IMR-90 (cell line): ENCODE measurements at regions of chr1 and their contacts with region 1.

Region 1: DNA sequence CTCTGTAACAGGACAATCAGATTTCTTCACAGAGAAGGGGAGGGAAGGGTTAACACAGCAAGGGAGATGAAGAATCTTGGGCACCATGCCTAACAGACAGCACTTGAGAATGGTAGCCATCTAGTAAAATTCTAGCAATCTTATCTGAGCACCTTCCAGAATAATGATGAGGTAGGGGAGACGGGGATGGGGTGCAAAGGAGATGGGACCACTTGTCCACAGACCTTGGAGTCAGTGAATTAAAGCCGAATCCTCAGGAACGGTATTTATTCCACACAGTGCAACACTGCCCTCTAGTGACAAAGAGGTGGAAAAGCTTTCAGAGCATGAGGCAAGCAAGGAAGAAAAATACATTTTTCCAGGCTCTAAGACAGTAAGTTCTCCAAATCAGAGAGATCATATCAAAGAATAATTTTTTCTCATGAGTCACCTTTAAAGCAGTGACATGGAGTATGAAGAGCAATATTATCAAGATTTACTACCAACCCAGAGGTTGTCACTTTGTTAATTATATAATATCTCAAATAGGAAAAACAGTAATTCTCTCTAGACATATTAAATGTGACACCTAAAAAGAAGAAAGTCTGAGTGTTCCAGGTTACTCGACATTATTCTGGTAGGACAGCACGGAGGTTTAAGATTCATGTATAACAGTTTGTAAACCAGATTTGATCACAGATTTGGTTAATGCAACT is 43.3 kb upstream of the LPAR3 start:
- DNase-seq: peak; percentile 72
- ATAC-seq: peak; percentile 92
- H3K4me3 ChIP-seq: no peak overlapping the region
- H3K27ac ChIP-seq: no peak overlapping the region
- H3K4me1 ChIP-seq: peaks cover 2% of the 10 kb centered on the region; the same call in 1 of the 2 replicates
- H3K27me3 ChIP-seq: peaks cover 12% of the 10 kb centered on the region
- CTCF ChIP-seq: peak; percentile 95
- POLR2A ChIP-seq: no peak
- RAD21 ChIP-seq: peak; percentile 96

Region 2: DNA sequence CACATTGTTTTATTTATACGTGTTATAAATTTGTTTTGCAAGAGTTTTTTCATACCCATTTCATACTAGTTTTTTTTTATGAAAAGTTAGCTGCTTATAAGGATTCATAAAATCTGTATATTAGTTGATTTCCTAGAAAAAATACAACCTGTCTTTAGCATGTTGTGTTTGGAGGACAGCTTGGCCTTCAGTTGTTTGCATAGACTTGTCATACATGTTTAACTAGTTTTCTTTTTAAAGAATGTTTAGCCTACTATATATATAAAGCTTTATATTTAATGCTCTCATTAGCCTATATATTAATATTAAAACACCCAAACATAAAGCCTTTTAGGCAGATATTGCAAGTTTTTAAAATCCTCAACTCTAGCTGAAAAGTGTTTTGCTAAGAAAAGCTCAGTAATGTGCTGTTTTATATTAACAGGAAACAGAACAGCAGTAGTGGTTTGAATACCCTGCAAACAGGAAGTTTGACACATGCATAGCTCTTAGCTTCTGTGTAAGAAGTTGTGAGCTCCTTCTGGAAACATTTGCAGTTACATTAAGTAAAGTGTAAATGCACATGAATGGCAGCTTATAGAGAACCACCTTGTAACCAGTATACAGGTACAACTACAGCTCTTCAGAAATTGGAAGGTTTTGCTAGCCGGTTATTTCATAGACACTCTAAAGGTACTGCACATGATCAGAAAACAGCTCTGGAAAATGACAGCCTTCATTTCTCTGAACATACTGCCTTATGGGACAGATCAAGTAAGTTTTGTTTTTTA is 792.3 kb before region 1 on chr1 and contains the start of gene PRKACB:
- CTCF ChIA-PET with region 1: no interaction called
- POLR2A ChIA-PET with region 1: no interaction called
- dilution Hi-C with region 1: no loop called
- in situ Hi-C with region 1: no loop called
- intact Hi-C with region 1: loop called (anchors 5 kb)
- DNase-seq: peak; percentile 62
- ATAC-seq: peak; percentile 68
- H3K4me3 ChIP-seq: no peak within 1 kb of the TSS
- H3K27ac ChIP-seq: no peak within 1 kb of the TSS
- H3K4me1 ChIP-seq: peaks cover 5% of the 10 kb centered on the region
- H3K27me3 ChIP-seq: no peaks in the 10 kb centered on the region
- CTCF ChIP-seq: no peak
- POLR2A ChIP-seq: no peak
- RAD21 ChIP-seq: no peak
- total RNA-seq, gene PRKACB: 8.2 and 14.2 TPM in 2 replicates

Region 3: GRCh38 chr1:84467298-84467697 is 469.0 kb before region 1 on chr1:
- CTCF ChIA-PET with region 1: no interaction called
- POLR2A ChIA-PET with region 1: no interaction called
- dilution Hi-C with region 1: no loop called
- in situ Hi-C with region 1: loop called (anchors 10 kb)
- intact Hi-C with region 1: no loop called
- DNase-seq: no peak
- ATAC-seq: no peak
- H3K4me3 ChIP-seq: no peak overlapping the region
- H3K27ac ChIP-seq: no peak overlapping the region
- H3K4me1 ChIP-seq: no peaks in the 10 kb centered on the region
- H3K27me3 ChIP-seq: peaks cover 11% of the 10 kb centered on the region
- CTCF ChIP-seq: no peak
- POLR2A ChIP-seq: no peak
- RAD21 ChIP-seq: no peak

Region 4: DNA sequence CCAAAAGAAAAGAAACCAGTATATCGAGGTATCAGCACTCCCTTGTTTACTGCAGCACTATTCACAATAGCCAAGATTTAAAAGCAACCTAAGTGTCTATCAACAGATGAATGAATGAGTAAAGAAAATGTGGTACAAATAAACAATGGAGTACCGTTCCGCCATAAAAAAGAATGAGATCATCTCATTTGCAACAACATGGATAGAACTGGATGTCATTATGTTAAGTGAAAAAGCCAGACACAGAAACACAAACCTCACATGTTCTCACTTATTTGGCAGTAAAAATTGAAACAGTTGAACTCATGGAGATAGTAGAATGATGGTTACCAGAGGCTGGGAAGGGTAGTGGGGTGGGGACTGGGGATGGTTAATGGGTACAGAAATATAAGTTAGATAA is 425.6 kb before region 1 on chr1:
- CTCF ChIA-PET with region 1: no interaction called
- POLR2A ChIA-PET with region 1: no interaction called
- dilution Hi-C with region 1: no loop called
- in situ Hi-C with region 1: no loop called
- intact Hi-C with region 1: no loop called
- DNase-seq: no peak
- ATAC-seq: no peak
- H3K4me3 ChIP-seq: no peak overlapping the region
- H3K27ac ChIP-seq: no peak overlapping the region
- H3K4me1 ChIP-seq: no peaks in the 10 kb centered on the region
- H3K27me3 ChIP-seq: no peaks in the 10 kb centered on the region
- CTCF ChIP-seq: no peak
- POLR2A ChIP-seq: no peak
- RAD21 ChIP-seq: no peak